ENCODE measurements at regions of chr12 and their contacts with region 1.

Region 1: GRCh38 chr12:71685914-71686665 is at the start of gene TMEM19:
- DNase-seq: peak; percentile 90 to 92
- ATAC-seq: peak; percentile 99 to 100 (median 99)
- H3K4me3 ChIP-seq: peak within 1 kb of the TSS; percentile 48 to 78 (median 68)
- H3K27ac ChIP-seq: peak within 1 kb of the TSS; percentile 58 to 96 (median 92)
- H3K4me1 ChIP-seq: peaks cover 0 to 42% (median 29%) of the 10 kb centered on the region in 9 donors
- H3K27me3 ChIP-seq: no peaks in the 10 kb centered on the region
- CTCF ChIP-seq: peak in 6 of 9 donors; percentile 14 to 63 (median 42)
- total RNA-seq, gene TMEM19: 17.4 to 32.2 (median 27.6) TPM

Region 2: DNA sequence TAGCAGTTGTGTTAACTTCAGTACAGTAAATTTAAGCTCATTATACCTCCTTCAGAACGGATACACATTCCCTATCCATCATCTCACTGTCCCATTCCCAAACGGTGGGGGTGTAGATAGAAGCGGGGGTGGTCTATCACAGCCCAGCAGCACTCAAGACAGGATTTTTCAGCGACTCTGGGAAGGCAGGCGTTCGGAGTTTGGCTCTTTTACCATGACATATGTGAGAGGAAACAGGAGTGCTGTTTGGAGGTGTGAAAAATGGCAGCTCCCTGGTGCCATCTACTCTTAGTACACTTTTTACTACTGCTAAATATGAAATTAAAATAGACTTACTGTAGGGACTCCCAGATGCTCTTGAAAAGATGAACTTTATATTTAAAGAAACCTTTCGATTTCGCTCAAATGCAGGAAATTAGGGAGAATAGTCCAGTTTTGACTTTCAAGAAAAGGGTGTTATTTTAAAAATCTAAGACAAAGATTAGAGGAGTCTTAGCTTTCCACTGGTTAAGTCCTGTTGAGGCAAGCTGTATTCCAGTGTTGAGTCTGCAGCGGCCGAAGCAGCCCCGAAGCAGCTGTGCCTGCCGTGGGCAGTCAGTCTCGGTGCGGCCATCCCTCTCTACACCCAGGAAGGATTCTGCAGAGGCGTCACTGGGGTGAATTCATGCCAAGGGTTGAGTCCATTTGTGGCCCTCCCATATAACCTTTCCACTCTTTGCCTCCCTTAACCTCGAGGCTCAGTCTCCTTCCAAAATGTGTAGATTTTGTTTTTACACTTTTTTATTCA is 1277.9 kb before region 1 on chr12:
- intact Hi-C with region 1: no loop called
- DNase-seq: no peak
- ATAC-seq: no peak
- H3K4me3 ChIP-seq: no peak overlapping the region
- H3K27ac ChIP-seq: no peak overlapping the region
- H3K4me1 ChIP-seq: no peaks in the 10 kb centered on the region
- H3K27me3 ChIP-seq: no peaks in the 10 kb centered on the region
- CTCF ChIP-seq: no peak

Region 3: DNA sequence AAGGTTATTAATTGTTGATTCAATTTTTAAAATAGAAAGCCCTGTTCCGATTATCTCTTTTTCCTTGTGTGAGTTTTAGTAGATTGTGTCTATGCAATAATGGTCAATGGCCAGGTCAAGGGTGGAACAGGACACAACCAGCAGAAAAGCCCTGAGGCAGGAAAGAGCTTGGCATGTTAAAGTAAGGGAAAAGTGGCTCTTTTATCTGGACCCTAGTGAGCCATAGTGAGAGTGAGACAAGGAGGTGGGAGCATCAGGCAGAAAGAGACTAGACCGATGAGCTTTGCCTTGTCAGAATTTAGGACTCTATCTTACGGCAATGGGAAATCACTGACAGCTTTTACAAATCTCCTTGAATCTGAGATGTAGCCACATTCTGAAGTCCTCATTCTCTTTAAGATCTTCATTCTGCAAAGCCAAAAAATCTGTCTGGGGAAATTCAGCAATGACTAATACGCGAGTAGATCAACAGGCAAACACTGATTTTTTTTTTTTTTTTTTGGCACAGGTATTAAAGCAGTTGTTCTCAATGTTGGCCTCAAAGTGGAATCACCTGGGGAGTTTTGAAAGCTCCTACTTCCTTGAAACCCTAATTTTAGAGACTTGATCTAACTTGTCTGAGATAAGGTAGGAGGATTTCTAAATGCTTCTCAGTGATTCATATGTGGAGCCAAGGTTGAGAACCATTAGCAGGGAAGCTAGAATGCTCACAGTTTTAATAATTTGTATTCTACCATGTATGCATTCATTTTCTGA is 33.7 kb after region 1 on chr12:
- intact Hi-C with region 1: no loop called
- DNase-seq: no peak
- ATAC-seq: no peak
- H3K4me3 ChIP-seq: no peak overlapping the region
- H3K27ac ChIP-seq: no peak overlapping the region
- H3K4me1 ChIP-seq: no peaks in the 10 kb centered on the region
- H3K27me3 ChIP-seq: no peaks in the 10 kb centered on the region
- CTCF ChIP-seq: no peak

Region 4: GRCh38 chr12:71754461-71755145 is 68.5 kb after region 1 on chr12 and contains the start of gene RAB21:
- intact Hi-C with region 1: loop called in 5 of 10 experiments (anchors 2 to 5 kb)
- DNase-seq: peak; percentile 99
- ATAC-seq: peak; percentile 96 to 98 (median 98)
- H3K4me3 ChIP-seq: peak within 1 kb of the TSS; percentile 75 to 97 (median 88)
- H3K27ac ChIP-seq: peak within 1 kb of the TSS; percentile 93 to 99 (median 96)
- H3K4me1 ChIP-seq: peaks cover 0 to 44% (median 32%) of the 10 kb centered on the region in 9 donors
- H3K27me3 ChIP-seq: peaks cover 0 to 14% (median 0%) of the 10 kb centered on the region in 7 donors
- CTCF ChIP-seq: peak in 7 of 9 donors; percentile 23 to 53 (median 34)
- total RNA-seq, gene RAB21: 137 to 271 (median 211) TPM

Region 5: DNA sequence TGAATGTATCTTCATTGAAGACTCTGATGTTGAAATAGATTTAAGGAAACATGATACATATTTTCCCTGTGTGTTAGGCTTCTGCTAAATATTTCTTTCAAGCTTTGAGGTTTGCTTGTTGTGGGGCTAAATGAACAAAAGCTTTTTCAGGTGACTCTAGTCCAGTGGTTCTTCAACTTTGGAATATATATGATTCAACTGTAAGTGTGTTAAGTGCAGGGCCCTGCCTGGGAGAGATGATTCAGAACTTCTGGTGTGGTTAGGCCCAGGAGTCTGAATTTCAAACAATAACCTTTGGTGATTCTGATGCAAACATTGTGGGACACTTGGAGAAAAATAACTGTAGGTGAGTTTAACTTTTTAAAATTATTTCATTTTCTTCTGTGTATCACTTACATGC is 679.1 kb after region 1 on chr12:
- intact Hi-C with region 1: no loop called
- DNase-seq: no peak
- ATAC-seq: no peak
- H3K4me3 ChIP-seq: no peak overlapping the region
- H3K27ac ChIP-seq: no peak overlapping the region
- H3K4me1 ChIP-seq: no peaks in the 10 kb centered on the region
- H3K27me3 ChIP-seq: no peaks in the 10 kb centered on the region
- CTCF ChIP-seq: no peak